ENCODE measurements at regions of chr19 and their contacts with region 1.

Region 1: DNA sequence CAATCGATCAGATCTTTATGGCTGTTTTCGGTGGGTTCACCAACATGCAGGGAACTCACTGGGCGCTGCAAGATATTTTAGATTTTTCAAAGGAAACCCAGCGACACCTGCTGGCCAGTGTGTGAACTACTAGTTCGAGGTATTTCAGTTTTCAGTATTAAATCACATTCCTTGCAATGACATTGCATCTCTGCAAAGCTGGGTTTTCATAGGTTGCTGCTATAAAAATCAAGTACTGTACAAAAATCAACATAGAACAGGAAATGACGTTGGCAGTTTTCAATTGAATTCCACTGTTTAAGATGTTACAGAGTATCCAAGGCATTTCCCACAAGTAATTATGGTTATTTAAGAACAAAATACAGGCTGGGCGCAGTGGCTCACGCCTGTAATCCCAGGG is 17.6 kb downstream of the LIG1 start:
- DNase-seq: peak in 1 of 2 experiments; percentile 81
- H3K4me3 ChIP-seq: no peak overlapping the region
- H3K27ac ChIP-seq: no peak overlapping the region
- H3K4me1 ChIP-seq: no peaks in the 10 kb centered on the region
- H3K27me3 ChIP-seq: no peaks in the 10 kb centered on the region; a peak in 1 of 7 replicates
- CTCF ChIP-seq: peak in 2 of 3 experiments; percentile 72 to 73; a peak in 3 of 4 replicates
- EP300 ChIP-seq: no peak
- POLR2A ChIP-seq: no peak
- RAD21 ChIP-seq: peak; percentile 69 to 74

Region 2: DNA sequence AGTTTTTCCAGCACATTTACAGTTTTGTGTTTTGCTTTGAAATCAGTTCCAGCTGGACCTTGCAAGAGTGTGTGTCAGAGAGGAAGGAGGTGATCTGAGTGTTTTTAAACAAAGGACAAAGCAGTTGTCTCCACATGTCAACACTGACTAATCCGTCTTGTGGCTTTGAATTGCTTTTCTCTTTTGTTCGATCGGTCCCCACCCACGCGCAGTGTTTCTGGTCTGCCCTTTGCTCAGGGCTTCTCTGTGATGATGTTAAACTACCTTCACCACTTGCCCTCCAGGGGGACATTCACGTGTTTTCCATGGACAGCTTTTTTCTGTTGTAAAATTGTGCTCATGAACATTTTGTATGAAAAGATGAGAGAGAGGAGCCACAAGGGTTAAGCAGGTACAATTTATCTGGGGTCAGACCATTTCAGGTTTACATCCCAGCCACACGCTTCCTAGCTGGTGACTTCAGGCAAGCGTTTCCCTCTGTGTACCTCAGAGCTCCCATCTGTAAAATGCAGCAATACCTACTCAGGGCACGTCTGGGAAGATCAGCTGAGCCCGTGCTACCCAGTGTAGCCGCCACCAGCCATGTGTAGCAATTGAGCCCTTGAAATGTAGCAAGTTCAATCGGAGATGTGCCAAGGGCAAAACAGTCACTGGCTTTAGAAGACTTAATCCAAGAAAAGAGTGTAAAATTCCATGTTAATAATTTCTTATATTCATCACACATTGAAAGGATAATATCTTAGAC is 28.5 kb before region 1 on chr19:
- CTCF ChIA-PET with region 1: interaction called, 49 read pairs
- POLR2A ChIA-PET with region 1: interaction called, 3 read pairs
- DNase-seq: no peak
- H3K4me3 ChIP-seq: no peak overlapping the region
- H3K27ac ChIP-seq: no peak overlapping the region
- H3K4me1 ChIP-seq: no peaks in the 10 kb centered on the region
- H3K27me3 ChIP-seq: no peaks in the 10 kb centered on the region
- CTCF ChIP-seq: no peak
- EP300 ChIP-seq: no peak
- POLR2A ChIP-seq: no peak
- RAD21 ChIP-seq: no peak

Region 3: GRCh38 chr19:48135411-48135810 is 17.1 kb before region 1 on chr19:
- CTCF ChIA-PET with region 1: interaction called, 12 read pairs
- POLR2A ChIA-PET with region 1: interaction called, 3 read pairs
- DNase-seq: peak in 1 of 2 experiments; percentile 59
- H3K4me3 ChIP-seq: no peak overlapping the region
- H3K27ac ChIP-seq: no peak overlapping the region
- H3K4me1 ChIP-seq: no peaks in the 10 kb centered on the region
- H3K27me3 ChIP-seq: no peaks in the 10 kb centered on the region
- CTCF ChIP-seq: no peak
- EP300 ChIP-seq: no peak
- POLR2A ChIP-seq: no peak
- RAD21 ChIP-seq: no peak

Region 4: DNA sequence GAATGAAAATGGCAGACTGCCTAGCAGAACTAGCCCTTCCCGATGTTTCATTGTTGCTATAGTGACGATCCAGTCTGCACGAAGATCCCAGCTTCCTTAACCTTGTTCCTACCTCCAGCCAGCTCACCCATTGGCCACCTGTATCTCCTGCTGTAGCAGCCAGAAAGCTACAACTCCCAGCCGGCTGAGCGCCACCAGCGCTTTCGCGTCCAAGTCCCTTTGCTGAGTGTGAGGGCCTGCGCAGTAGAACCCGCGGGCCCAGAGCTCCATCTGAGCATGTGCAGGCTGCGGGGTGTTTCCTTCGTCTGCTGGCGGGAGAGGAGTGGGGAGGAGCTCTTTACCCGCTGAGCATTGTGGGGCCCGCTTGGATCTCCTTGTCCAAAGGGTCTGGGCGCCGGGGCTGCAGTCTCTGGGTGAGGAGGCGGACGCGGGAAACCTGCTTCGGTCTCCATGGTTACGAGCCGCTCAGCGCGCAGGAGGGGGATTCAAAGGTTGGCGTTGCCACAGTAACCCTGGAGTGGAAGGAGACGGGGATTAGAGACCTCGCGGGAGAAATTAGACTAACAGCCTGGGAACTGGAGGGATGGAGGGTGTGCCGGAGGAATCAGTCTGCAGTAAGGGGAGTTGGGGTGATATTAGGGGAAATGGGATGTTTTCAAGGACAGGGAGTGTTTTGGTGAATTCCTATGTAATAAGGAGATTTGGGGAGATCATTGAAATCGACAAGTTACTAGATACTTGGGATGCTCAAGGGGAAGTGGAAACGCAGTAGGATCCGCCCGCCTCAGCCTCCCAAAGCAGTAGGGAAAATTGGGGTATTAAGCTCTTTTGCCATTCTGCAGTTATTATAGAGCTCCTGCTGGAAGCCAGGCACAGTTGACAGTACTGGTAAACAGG is 51.4 kb after region 1 on chr19:
- CTCF ChIA-PET with region 1: no interaction called
- POLR2A ChIA-PET with region 1: no interaction called
- DNase-seq: peak; percentile 94 to 96
- H3K4me3 ChIP-seq: peak overlapping the region; percentile 53 to 68 (median 58)
- H3K27ac ChIP-seq: peak overlapping the region; percentile 81
- H3K4me1 ChIP-seq: peaks cover 0 to 7% (median 1%) of the 10 kb centered on the region in 4 experiments; a peak in 2 of 7 replicates
- H3K27me3 ChIP-seq: no peaks in the 10 kb centered on the region; a peak in 1 of 7 replicates
- CTCF ChIP-seq: no peak
- EP300 ChIP-seq: no peak
- POLR2A ChIP-seq: peak; percentile 63 to 75
- RAD21 ChIP-seq: no peak